Naive thymus-derived CD4-positive, alpha-beta T cell (primary cell): ENCODE measurements at regions of chr21 and their contacts with region 1.

Region 1: DNA sequence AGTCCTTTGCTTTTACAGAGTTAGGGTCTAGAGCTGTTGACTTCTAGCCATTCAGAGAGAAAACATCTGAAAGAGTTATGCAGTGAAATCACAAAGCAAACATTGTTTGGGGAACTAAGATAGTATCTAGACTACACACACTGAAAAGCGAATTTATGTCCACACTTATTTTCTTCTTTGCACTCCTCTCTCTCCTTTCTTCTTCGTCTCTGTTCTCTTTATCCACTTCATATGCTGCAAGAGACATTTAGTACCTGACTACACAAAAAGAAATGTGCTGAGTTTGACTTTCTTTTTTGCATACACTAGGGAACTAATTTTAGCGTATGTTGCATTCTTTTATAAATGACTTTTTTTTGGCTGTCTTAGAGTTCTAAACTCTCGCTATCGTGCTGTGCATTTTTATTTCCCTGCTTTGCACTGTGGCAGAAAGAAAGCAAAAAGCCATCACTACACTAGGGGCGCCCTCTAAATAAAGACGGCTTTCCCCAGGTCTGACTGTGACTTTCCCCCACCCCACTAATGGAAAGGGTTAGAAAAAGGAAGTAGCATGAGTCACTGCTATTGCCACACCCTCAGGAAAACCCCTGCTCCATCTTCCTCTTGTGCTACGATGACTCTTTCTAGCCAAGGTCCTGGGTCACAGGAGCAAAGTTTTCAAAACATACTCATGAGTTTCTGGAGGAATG is 65.7 kb downstream of the MAP3K7CL start:
- DNase-seq: peak in 8 of 9 donors; percentile 13 to 71 (median 44)
- ATAC-seq: peak; percentile 99
- H3K4me3 ChIP-seq: peak overlapping the region; percentile 30
- H3K4me3 Mint-ChIP-seq: peak overlapping the region; percentile 63 to 92 (median 82)
- H3K27ac ChIP-seq: no peak overlapping the region
- H3K27ac Mint-ChIP-seq: peak overlapping the region; percentile 2 to 88 (median 84)
- H3K4me1 ChIP-seq: peaks cover 0 to 2% of the 10 kb centered on the region in 2 donors
- H3K4me1 Mint-ChIP-seq: peaks cover 12 to 40% (median 24%) of the 10 kb centered on the region in 7 donors
- H3K27me3 ChIP-seq: no peaks in the 10 kb centered on the region
- H3K27me3 Mint-ChIP-seq: no peaks in the 10 kb centered on the region

Region 2: GRCh38 chr21:28884976-28885852 is 310.9 kb before region 1 on chr21:
- CTCF ChIA-PET with region 1: no interaction called
- POLR2A ChIA-PET with region 1: no interaction called
- intact Hi-C with region 1: loop called in 1 of 2 experiments (anchors 10 kb)
- DNase-seq: peak; percentile 84 to 95 (median 92)
- ATAC-seq: peak; percentile 95
- H3K4me3 ChIP-seq: peak overlapping the region; percentile 71
- H3K4me3 Mint-ChIP-seq: peak overlapping the region; percentile 89 to 99 (median 94)
- H3K27ac ChIP-seq: peak overlapping the region; percentile 80
- H3K27ac Mint-ChIP-seq: peak overlapping the region; percentile 98 to 99 (median 99)
- H3K4me1 ChIP-seq: peaks cover 9 to 14% of the 10 kb centered on the region in 2 donors
- H3K4me1 Mint-ChIP-seq: peaks cover 8 to 25% (median 20%) of the 10 kb centered on the region in 7 donors
- H3K27me3 ChIP-seq: no peaks in the 10 kb centered on the region
- H3K27me3 Mint-ChIP-seq: peaks cover 0 to 29% (median 0%) of the 10 kb centered on the region in 5 donors

Region 3: GRCh38 chr21:29073222-29074006 is 122.7 kb before region 1 on chr21 and contains the start of gene CCT8:
- CTCF ChIA-PET with region 1: no interaction called
- POLR2A ChIA-PET with region 1: no interaction called
- intact Hi-C with region 1: loop called (anchors 1 kb)
- DNase-seq: peak; percentile 93 to 100 (median 98)
- ATAC-seq: peak; percentile 96
- H3K4me3 ChIP-seq: peak within 1 kb of the TSS; percentile 80
- H3K4me3 Mint-ChIP-seq: peak within 1 kb of the TSS; percentile 98 to 100 (median 99)
- H3K27ac ChIP-seq: peak within 1 kb of the TSS; percentile 88
- H3K27ac Mint-ChIP-seq: peak within 1 kb of the TSS; percentile 97 to 100 (median 99)
- H3K4me1 ChIP-seq: peaks cover 24 to 25% of the 10 kb centered on the region in 2 donors
- H3K4me1 Mint-ChIP-seq: peaks cover 19 to 78% (median 67%) of the 10 kb centered on the region in 7 donors
- H3K27me3 ChIP-seq: no peaks in the 10 kb centered on the region
- H3K27me3 Mint-ChIP-seq: no peaks in the 10 kb centered on the region
- total RNA-seq, gene CCT8: 87.6 to 223 (median 126) TPM

Region 4: GRCh38 chr21:29208682-29209059 is 12.5 kb after region 1 on chr21:
- CTCF ChIA-PET with region 1: no interaction called
- POLR2A ChIA-PET with region 1: no interaction called
- intact Hi-C with region 1: loop called in 1 of 2 experiments (anchors 1 kb)
- DNase-seq: no peak
- ATAC-seq: peak; percentile 63
- H3K4me3 ChIP-seq: no peak overlapping the region
- H3K4me3 Mint-ChIP-seq: no peak overlapping the region
- H3K27ac ChIP-seq: no peak overlapping the region
- H3K27ac Mint-ChIP-seq: no peak overlapping the region
- H3K4me1 ChIP-seq: no peaks in the 10 kb centered on the region
- H3K4me1 Mint-ChIP-seq: peaks cover 0 to 16% (median 0%) of the 10 kb centered on the region in 7 donors
- H3K27me3 ChIP-seq: no peaks in the 10 kb centered on the region
- H3K27me3 Mint-ChIP-seq: peaks cover 0 to 4% (median 0%) of the 10 kb centered on the region in 5 donors

Region 5: GRCh38 chr21:29343519-29343918 is 147.4 kb after region 1 on chr21:
- CTCF ChIA-PET with region 1: no interaction called
- POLR2A ChIA-PET with region 1: no interaction called
- intact Hi-C with region 1: loop called in 1 of 2 experiments (anchors 1 kb)
- DNase-seq: no peak
- ATAC-seq: no peak
- H3K4me3 ChIP-seq: no peak overlapping the region
- H3K4me3 Mint-ChIP-seq: no peak overlapping the region
- H3K27ac ChIP-seq: no peak overlapping the region
- H3K27ac Mint-ChIP-seq: no peak overlapping the region
- H3K4me1 ChIP-seq: peaks cover 0 to 6% of the 10 kb centered on the region in 2 donors
- H3K4me1 Mint-ChIP-seq: peaks cover 4 to 31% (median 15%) of the 10 kb centered on the region in 7 donors
- H3K27me3 ChIP-seq: no peaks in the 10 kb centered on the region
- H3K27me3 Mint-ChIP-seq: no peaks in the 10 kb centered on the region

Region 6: DNA sequence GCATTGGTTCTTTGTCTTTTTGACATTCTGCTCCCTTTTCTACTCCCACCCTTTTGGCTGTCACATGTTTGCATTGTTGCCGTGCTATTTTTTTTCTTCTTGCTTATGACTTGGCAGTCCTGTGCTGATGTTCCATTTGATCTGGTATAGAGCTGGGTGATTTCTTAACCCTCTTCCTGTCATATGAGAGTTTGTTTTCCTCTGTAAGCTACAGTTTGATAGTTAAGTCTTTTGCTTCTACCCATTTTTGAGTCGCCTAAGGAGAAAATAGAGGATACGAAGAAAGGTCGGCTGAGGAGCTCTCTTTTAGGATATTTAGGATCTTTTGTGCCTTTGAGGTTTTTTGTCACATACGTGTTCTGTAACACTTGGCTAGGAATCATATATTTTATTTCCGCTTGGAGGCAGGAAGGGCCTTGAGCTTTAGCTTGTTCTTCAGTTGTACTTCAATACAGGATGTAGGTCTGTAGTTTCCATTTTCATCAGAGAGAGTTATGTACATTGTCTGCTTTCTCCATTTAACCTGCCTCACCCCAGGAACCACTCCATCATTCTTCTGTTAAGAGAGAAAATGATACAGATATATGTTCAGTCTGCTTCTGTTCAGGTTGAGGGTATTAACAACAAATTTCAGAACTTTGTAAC is 253.3 kb after region 1 on chr21:
- CTCF ChIA-PET with region 1: no interaction called
- POLR2A ChIA-PET with region 1: interaction called, 4 read pairs
- intact Hi-C with region 1: loop called in 1 of 2 experiments (anchors 1 kb)
- DNase-seq: peak in 7 of 9 donors; percentile 50 to 90 (median 76)
- ATAC-seq: peak; percentile 93
- H3K4me3 ChIP-seq: peak overlapping the region; percentile 17
- H3K4me3 Mint-ChIP-seq: peak overlapping the region; percentile 1 to 77 (median 64)
- H3K27ac ChIP-seq: peak overlapping the region; percentile 66
- H3K27ac Mint-ChIP-seq: peak overlapping the region; percentile 84 to 98 (median 94)
- H3K4me1 ChIP-seq: peaks cover 7 to 17% of the 10 kb centered on the region in 2 donors
- H3K4me1 Mint-ChIP-seq: peaks cover 5 to 67% (median 24%) of the 10 kb centered on the region in 7 donors
- H3K27me3 ChIP-seq: no peaks in the 10 kb centered on the region
- H3K27me3 Mint-ChIP-seq: no peaks in the 10 kb centered on the region